HCT116 (cell line): ENCODE measurements at regions of chrX and their contacts with region 1.

Region 1: GRCh38 chrX:18425199-18426003 is at the start of gene CDKL5:
- DNase-seq: peak; percentile 90
- ATAC-seq: peak; percentile 92
- H3K4me3 ChIP-seq: peak within 1 kb of the TSS; percentile 55 to 62
- H3K27ac ChIP-seq: no peak within 1 kb of the TSS
- H3K4me1 ChIP-seq: peaks cover 0 to 6% of the 10 kb centered on the region in 2 experiments; a peak in 2 of 4 replicates
- H3K27me3 ChIP-seq: peaks cover 4% of the 10 kb centered on the region; the same call in 1 of the 2 replicates
- CTCF ChIP-seq: no peak
- POLR2A ChIP-seq: no peak
- RAD21 ChIP-seq: no peak
- total RNA-seq, gene CDKL5: 2.5 TPM

Region 2: GRCh38 chrX:18674788-18675735 is 249.7 kb after region 1 on chrX:
- CTCF ChIA-PET with region 1: no interaction called
- POLR2A ChIA-PET with region 1: no interaction called
- RAD21 ChIA-PET with region 1: no interaction called
- intact Hi-C with region 1: loop called (anchors 10 kb)
- DNase-seq: peak; percentile 24
- ATAC-seq: peak; percentile 85
- H3K4me3 ChIP-seq: peak overlapping the region; percentile 38 to 56
- H3K27ac ChIP-seq: peak overlapping the region; percentile 46; the same call in 1 of the 2 replicates
- H3K4me1 ChIP-seq: peaks cover 0 to 6% of the 10 kb centered on the region in 2 experiments; a peak in 1 of 4 replicates
- H3K27me3 ChIP-seq: no peaks in the 10 kb centered on the region
- CTCF ChIP-seq: no peak
- POLR2A ChIP-seq: no peak
- RAD21 ChIP-seq: no peak